Left ventricle myocardium superior (tissue), 1 donor: ENCODE measurements at regions of chrX and their contacts with region 1.

Region 1: GRCh38 chrX:37926700-37927099 is 79.3 kb upstream of the DYNLT3 start:
- DNase-seq: no peak
- ATAC-seq: peak; percentile 41

Region 2: GRCh38 chrX:38166478-38167083 is 239.9 kb after region 1 on chrX:
- intact Hi-C with region 1: loop called (anchors 10 kb)
- DNase-seq: no peak
- ATAC-seq: no peak